PC-9 (cell line): ENCODE measurements at regions of chr6 and their contacts with region 1.

Region 1: DNA sequence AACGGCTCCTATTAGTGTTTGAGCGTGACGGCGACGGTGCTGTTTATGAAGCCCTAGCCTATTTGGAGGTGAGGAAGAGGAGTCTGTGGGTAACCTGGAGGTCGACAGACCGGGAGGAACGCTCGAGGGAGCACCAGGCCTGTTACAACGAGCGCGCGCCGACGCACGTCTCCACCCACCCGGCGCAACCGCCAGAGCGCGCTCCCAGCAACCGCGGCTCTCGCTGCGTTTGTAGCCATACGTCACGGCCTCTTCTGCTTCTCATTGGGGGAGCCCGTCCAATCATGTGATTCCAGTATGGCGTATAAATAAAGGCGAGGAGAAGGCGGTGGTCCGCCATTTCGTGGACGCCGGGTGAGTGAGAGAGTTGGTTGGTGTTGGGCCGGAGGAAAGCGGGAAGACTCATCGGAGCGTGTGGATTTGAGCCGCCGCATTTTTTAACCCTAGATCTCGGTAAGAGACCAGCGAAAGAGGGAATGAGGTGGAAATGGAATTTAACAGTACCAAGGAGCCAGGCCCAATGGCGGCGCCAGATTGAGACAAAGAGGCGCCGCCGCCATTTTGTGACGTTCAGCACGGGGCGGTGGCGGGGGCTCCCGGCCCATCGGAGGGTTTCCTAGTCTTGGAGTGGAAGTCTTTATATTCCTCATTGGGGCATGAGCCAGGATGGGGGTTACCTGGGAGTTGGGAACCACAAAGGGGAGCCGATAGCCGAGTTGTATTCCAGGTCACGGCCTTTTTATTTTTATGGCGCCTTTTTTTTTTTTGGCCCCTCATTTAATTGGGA is at the start of gene SRSF3:
- DNase-seq: peak; percentile 91 to 95
- H3K4me3 ChIP-seq: peak within 1 kb of the TSS; percentile 100
- H3K27ac ChIP-seq: peak within 1 kb of the TSS; percentile 93
- H3K4me1 ChIP-seq: peaks cover 55% of the 10 kb centered on the region
- H3K27me3 ChIP-seq: no peaks in the 10 kb centered on the region
- CTCF ChIP-seq: peak; percentile 42; the same call in 1 of the 2 replicates
- total RNA-seq, gene SRSF3: 278 and 282 TPM in 2 replicates

Region 2: GRCh38 chr6:36442671-36443470 is 151.4 kb before region 1 on chr6 and contains the starts of genes KCTD20 and PXT1:
- CTCF ChIA-PET with region 1: no interaction called
- POLR2A ChIA-PET with region 1: no interaction called
- intact Hi-C with region 1: loop called (anchors 5 kb)
- DNase-seq: peak; percentile 67 to 88
- H3K4me3 ChIP-seq: peak within 1 kb of the TSS; percentile 75
- H3K27ac ChIP-seq: peak within 1 kb of the TSS; percentile 92
- H3K4me1 ChIP-seq: peaks cover 25% of the 10 kb centered on the region
- H3K27me3 ChIP-seq: no peaks in the 10 kb centered on the region
- CTCF ChIP-seq: no peak
- total RNA-seq, gene KCTD20: 34.2 and 42.5 TPM in 2 replicates
- total RNA-seq, gene PXT1: not detected in 2 replicates

Region 3: GRCh38 chr6:36526066-36526465 is 68.2 kb before region 1 on chr6:
- CTCF ChIA-PET with region 1: no interaction called
- POLR2A ChIA-PET with region 1: no interaction called
- intact Hi-C with region 1: loop called (anchors 5 kb)
- DNase-seq: peak in 1 of 2 experiments; percentile 70
- H3K4me3 ChIP-seq: no peak overlapping the region
- H3K27ac ChIP-seq: peak overlapping the region; percentile 14; the same call in 1 of the 2 replicates
- H3K4me1 ChIP-seq: peaks cover 16% of the 10 kb centered on the region
- H3K27me3 ChIP-seq: no peaks in the 10 kb centered on the region
- CTCF ChIP-seq: no peak

Region 4: GRCh38 chr6:36576561-36576960 is 17.7 kb before region 1 on chr6:
- CTCF ChIA-PET with region 1: interaction called, 13 read pairs
- POLR2A ChIA-PET with region 1: interaction called, 15 read pairs
- intact Hi-C with region 1: loop called (anchors 1 kb)
- DNase-seq: no peak
- H3K4me3 ChIP-seq: no peak overlapping the region
- H3K27ac ChIP-seq: peak overlapping the region; percentile 73
- H3K4me1 ChIP-seq: peaks cover 63% of the 10 kb centered on the region
- H3K27me3 ChIP-seq: no peaks in the 10 kb centered on the region
- CTCF ChIP-seq: no peak

Region 5: DNA sequence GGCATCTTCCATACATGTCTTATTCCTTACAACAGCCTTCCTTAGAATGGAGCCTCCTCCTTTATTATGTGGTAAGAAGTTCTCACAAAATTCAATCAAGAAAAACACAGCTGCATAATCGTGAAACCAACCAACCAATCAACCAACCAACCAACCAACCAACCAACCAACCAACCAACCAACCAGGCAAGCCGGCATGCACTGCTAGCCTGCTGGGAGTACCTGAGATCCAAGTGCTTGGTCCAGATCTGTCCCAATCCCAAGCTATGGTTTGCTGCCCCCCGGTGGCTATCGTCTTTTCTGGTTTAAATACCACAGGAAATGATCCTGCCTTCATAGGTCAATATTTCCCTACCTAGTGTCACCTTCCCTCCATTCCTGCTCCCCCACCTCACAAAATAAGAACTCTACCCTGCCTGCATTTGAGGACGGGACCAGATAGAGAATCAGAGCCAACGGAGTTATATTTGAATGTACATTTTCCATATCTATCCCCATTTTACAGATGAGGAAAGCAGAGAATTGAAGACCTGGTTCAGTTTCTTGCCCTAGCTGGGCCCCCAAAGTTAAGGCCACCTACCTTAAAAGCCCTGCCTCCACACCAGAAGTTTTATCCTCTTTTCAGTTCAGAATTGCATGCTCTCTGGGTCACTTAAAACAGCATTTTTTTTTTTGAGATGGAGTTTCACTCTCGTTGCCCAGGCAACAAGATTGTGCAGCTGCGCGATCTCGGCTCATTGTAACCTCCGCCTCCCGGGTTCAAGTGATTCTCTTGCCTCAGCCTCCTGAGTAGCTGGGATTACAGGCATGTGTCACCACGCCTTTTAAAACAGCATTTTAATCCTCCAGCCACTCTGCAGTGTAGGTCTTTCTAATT is 130.5 kb after region 1 on chr6:
- CTCF ChIA-PET with region 1: no interaction called
- POLR2A ChIA-PET with region 1: interaction called, 13 read pairs
- intact Hi-C with region 1: no loop called
- DNase-seq: peak; percentile 49 to 67
- H3K4me3 ChIP-seq: no peak overlapping the region
- H3K27ac ChIP-seq: no peak overlapping the region
- H3K4me1 ChIP-seq: no peaks in the 10 kb centered on the region
- H3K27me3 ChIP-seq: no peaks in the 10 kb centered on the region
- CTCF ChIP-seq: peak; percentile 79